Testis (tissue), 5 donors: ENCODE measurements at regions of chr9 and their contacts with region 1.

Region 1: GRCh38 chr9:33623658-33624586 is 99.9 kb downstream of the ANKRD18B start:
- DNase-seq: peak; percentile 80
- H3K4me3 ChIP-seq: no peak overlapping the region
- H3K27ac ChIP-seq: no peak overlapping the region
- H3K4me1 ChIP-seq: no peaks in the 10 kb centered on the region
- H3K27me3 ChIP-seq: no peaks in the 10 kb centered on the region
- CTCF ChIP-seq: peak; percentile 74 to 84 (median 82)
- POLR2A ChIP-seq: no peak

Region 2: DNA sequence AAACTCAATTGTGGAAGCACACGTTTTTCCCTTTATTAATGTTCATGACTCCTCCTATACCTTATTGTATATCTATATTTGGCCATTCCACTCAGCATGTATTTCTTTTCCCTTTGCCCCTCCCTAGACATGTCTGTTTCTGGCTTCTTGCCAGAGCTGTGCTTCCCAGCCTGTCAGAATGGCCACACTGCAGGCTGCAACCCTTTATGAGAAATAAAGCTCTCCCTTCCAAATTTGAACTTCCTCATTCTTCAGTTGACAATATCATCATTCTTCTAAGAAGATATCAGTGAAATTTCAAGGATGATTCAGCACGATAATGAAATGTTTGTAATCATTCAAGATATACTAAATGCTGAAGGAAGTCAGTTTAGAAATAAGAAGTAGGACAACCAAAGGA is 63.9 kb after region 1 on chr9:
- intact Hi-C with region 1: no loop called
- DNase-seq: no peak
- H3K4me3 ChIP-seq: no peak overlapping the region
- H3K27ac ChIP-seq: no peak overlapping the region
- H3K4me1 ChIP-seq: no peaks in the 10 kb centered on the region
- H3K27me3 ChIP-seq: no peaks in the 10 kb centered on the region
- CTCF ChIP-seq: no peak
- POLR2A ChIP-seq: no peak

Region 3: GRCh38 chr9:33721674-33722358 is 97.9 kb after region 1 on chr9:
- intact Hi-C with region 1: loop called (anchors 5 kb)
- DNase-seq: peak; percentile 93
- H3K4me3 ChIP-seq: no peak overlapping the region
- H3K27ac ChIP-seq: no peak overlapping the region
- H3K4me1 ChIP-seq: no peaks in the 10 kb centered on the region
- H3K27me3 ChIP-seq: no peaks in the 10 kb centered on the region
- CTCF ChIP-seq: peak; percentile 99 to 100 (median 100)
- POLR2A ChIP-seq: no peak